ENCODE measurements at regions of chrX and their contacts with region 1.

Region 1: DNA sequence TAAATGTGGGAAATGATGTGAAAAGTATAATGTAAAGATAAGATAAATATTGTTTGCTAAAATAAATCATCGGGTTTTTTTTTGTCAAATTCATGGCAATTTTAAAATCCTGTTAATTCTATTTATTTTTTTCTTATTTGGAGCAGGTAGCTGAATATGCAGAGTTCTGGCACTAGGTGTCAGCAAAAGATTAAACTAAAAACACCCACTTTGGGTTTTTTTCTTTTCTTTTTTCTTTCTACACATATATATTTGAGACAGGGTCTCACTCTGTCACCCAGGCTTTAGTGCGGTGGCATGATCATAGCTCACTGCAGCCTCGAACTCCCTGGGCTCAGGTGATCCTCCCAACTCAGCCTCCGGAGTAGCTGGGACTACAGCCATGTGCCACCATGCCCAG is 6.9 kb upstream of the RAP2C start:
- DNase-seq: no peak
- H3K4me3 ChIP-seq: no peak overlapping the region
- H3K4me3 Mint-ChIP-seq: no peak overlapping the region
- H3K27ac ChIP-seq: no peak overlapping the region
- H3K27ac Mint-ChIP-seq: no peak overlapping the region
- H3K4me1 ChIP-seq: no peaks in the 10 kb centered on the region
- H3K4me1 Mint-ChIP-seq: peaks cover 5% of the 10 kb centered on the region
- H3K27me3 ChIP-seq: peaks cover 0 to 4% of the 10 kb centered on the region in 2 donors
- H3K27me3 Mint-ChIP-seq: peaks cover 2 to 24% (median 2%) of the 10 kb centered on the region in 3 donors
- CTCF ChIP-seq: peak; percentile 32

Region 2: GRCh38 chrX:131854581-131854980 is 371.6 kb before region 1 on chrX:
- intact Hi-C with region 1: loop called in 1 of 2 experiments (anchors 10 kb)
- DNase-seq: peak in 2 of 3 donors; percentile 14 to 29
- H3K4me3 ChIP-seq: no peak overlapping the region
- H3K4me3 Mint-ChIP-seq: no peak overlapping the region
- H3K27ac ChIP-seq: no peak overlapping the region
- H3K27ac Mint-ChIP-seq: no peak overlapping the region
- H3K4me1 ChIP-seq: no peaks in the 10 kb centered on the region
- H3K4me1 Mint-ChIP-seq: peaks cover 7% of the 10 kb centered on the region
- H3K27me3 ChIP-seq: peaks cover 0 to 36% of the 10 kb centered on the region in 2 donors
- H3K27me3 Mint-ChIP-seq: peaks cover 0 to 62% (median 4%) of the 10 kb centered on the region in 3 donors
- CTCF ChIP-seq: peak; percentile 39

Region 3: DNA sequence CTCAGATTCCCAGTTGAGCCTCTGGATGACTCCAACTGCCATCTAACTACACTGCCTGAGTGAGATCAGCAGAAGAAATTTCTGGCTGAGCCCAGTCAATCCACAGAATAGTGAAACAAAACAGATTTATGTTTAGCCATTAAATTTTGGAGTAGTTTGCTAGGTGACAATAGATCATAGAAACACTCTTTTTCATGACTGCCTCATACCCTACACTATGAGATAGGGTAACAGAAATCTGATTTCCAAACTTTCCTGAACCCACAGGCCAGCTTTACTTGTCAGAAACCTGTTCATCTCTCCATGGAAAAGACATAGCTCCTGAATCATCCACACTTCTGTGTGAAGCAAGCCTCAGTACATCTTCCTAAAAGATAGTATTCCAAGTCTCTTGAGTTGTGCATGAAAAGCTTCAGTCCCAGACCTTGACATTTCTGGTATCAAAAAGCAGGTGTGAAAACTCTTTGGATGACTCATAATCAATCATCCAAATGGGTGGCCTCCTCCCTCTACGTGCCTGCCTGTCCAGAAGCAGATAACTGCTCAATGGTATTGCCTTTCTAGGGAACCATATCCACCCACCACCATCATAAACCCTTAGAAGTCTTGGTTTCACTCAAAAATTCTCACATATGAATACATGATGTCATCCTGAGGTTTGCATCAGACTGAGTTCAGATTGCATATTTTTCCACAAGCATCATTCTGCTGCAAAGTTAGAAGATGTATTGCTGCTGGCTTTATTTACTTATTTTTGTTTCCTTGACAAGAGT is 40.6 kb after region 1 on chrX:
- intact Hi-C with region 1: no loop called
- DNase-seq: no peak
- H3K4me3 ChIP-seq: no peak overlapping the region
- H3K4me3 Mint-ChIP-seq: no peak overlapping the region
- H3K27ac ChIP-seq: no peak overlapping the region
- H3K27ac Mint-ChIP-seq: no peak overlapping the region
- H3K4me1 ChIP-seq: no peaks in the 10 kb centered on the region
- H3K4me1 Mint-ChIP-seq: peaks cover 3% of the 10 kb centered on the region
- H3K27me3 ChIP-seq: peaks cover 0 to 4% of the 10 kb centered on the region in 2 donors
- H3K27me3 Mint-ChIP-seq: peaks cover 0 to 11% (median 0%) of the 10 kb centered on the region in 3 donors
- CTCF ChIP-seq: no peak

Region 4: GRCh38 chrX:132520213-132520612 is 294.0 kb after region 1 on chrX:
- intact Hi-C with region 1: no loop called
- DNase-seq: no peak
- H3K4me3 ChIP-seq: no peak overlapping the region
- H3K4me3 Mint-ChIP-seq: no peak overlapping the region
- H3K27ac ChIP-seq: no peak overlapping the region
- H3K27ac Mint-ChIP-seq: no peak overlapping the region
- H3K4me1 ChIP-seq: no peaks in the 10 kb centered on the region
- H3K4me1 Mint-ChIP-seq: no peaks in the 10 kb centered on the region
- H3K27me3 ChIP-seq: peaks cover 0 to 6% of the 10 kb centered on the region in 2 donors
- H3K27me3 Mint-ChIP-seq: peaks cover 2 to 3% (median 3%) of the 10 kb centered on the region in 3 donors
- CTCF ChIP-seq: no peak

Region 5: GRCh38 chrX:132631579-132632232 is 405.5 kb after region 1 on chrX:
- intact Hi-C with region 1: loop called in 1 of 2 experiments (anchors 5 kb)
- DNase-seq: peak in 2 of 3 donors; percentile 2 to 13
- H3K4me3 ChIP-seq: no peak overlapping the region
- H3K4me3 Mint-ChIP-seq: no peak overlapping the region
- H3K27ac ChIP-seq: no peak overlapping the region
- H3K27ac Mint-ChIP-seq: no peak overlapping the region
- H3K4me1 ChIP-seq: no peaks in the 10 kb centered on the region
- H3K4me1 Mint-ChIP-seq: no peaks in the 10 kb centered on the region
- H3K27me3 ChIP-seq: peaks cover 0 to 6% of the 10 kb centered on the region in 2 donors
- H3K27me3 Mint-ChIP-seq: peaks cover 0 to 3% (median 0%) of the 10 kb centered on the region in 3 donors
- CTCF ChIP-seq: peak; percentile 39

Measured in CD14-positive monocyte (primary cell).